ENCODE measurements at regions of chr7 and their contacts with region 1.

Region 1: DNA sequence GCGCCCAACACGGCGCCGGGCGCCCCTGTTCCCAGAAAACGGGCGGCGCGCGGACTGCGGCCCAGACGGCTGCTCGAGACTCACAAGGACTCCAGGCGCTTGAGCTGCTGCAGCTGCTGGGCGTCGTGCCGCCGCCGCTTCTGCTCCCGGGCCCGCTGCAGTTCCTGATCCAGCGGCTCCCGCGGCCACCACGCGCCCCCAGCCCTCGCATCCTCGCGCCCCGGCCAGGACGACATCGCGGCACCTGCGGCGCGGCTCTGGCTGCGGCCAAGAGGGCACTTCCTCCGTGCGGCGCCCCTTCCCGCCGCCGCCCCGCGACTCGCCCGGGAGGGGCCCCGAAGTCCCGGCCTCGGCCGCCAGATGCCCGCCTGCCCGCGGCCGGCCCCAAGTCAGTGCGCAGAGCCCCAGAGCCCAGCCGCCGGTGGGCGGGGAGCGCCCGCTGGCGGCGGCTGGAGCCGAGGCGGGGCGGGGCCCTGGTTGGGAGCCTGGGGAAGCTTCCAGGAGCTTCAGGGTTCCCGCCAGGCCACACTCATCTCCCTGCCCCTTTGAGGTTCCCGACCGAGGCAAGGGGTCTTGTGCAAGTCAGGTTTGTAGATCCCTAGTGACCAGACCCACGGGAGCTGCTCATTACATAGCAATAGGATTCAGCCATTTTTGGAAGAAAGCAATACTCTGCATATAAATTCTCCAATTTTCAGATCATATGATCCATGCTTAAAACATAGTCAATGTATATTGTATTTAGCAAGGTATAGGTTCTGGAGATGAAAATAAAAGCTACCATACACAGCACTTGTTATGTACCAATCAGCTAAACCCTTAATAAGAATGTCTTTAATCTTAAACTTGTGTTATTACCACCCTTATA is 14.2 kb upstream of the FKBP9 start:
- DNase-seq: peak; percentile 67 to 79
- H3K4me3 ChIP-seq: peak overlapping the region; percentile 45 to 91
- H3K27ac ChIP-seq: peak overlapping the region; percentile 97
- H3K4me1 ChIP-seq: no peaks in the 10 kb centered on the region
- H3K27me3 ChIP-seq: no peaks in the 10 kb centered on the region
- CTCF ChIP-seq: peak; percentile 59 to 85 (median 82)
- POLR2A ChIP-seq: peak; percentile 58

Region 2: GRCh38 chr7:32846701-32847100 is 96.3 kb before region 1 on chr7:
- intact Hi-C with region 1: loop called (anchors 10 kb)
- DNase-seq: peak; percentile 88 to 93
- H3K4me3 ChIP-seq: no peak overlapping the region
- H3K27ac ChIP-seq: no peak overlapping the region
- H3K4me1 ChIP-seq: no peaks in the 10 kb centered on the region
- H3K27me3 ChIP-seq: no peaks in the 10 kb centered on the region
- CTCF ChIP-seq: peak; percentile 82 to 92 (median 88)
- POLR2A ChIP-seq: no peak

Region 3: DNA sequence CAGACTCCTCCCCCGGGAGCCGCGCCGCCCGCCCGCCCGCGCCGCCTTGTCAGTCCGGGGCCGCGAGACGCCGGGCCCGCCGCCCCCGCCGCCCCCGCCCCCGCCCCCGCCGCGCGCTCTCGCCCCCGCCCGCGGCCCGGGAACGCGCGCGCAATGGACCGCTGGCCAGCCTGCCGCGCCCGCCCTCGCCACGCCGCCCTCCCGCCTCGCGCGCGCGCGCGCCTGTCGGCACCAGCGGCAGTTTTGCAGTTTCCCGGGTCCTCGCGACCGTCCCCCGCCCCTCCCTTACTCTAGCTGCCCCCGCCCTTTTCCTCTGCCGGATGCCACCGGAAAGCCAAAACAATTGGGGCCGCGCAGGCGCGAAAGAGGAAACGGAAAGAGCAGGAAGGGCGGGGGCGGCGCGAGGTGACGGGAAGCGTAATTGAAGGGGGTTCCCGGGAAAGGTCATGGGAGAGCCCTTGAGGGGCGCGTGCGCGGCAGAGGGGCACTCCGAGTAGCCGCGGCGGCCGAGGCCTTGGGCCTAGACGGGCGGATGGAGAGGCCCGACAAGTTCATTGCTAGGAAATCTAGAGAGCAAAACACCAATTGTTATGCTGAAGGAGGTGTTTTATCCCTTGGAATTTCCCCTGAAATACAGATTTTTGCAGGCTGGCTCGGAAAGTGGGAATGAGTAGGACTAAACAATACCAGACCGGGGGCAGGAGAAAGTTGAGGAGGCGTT is 51.1 kb before region 1 on chr7:
- intact Hi-C with region 1: loop called (anchors 10 kb)
- DNase-seq: peak; percentile 96 to 97
- H3K4me3 ChIP-seq: peak overlapping the region; percentile 78 to 100
- H3K27ac ChIP-seq: peak overlapping the region; percentile 95 to 100
- H3K4me1 ChIP-seq: peaks cover 0 to 6% of the 10 kb centered on the region in 2 donors
- H3K27me3 ChIP-seq: no peaks in the 10 kb centered on the region
- CTCF ChIP-seq: peak in 2 of 4 experiments; percentile 1 to 15
- POLR2A ChIP-seq: peak; percentile 40 to 53

Measured in uterus (tissue), 4 donors.